Testis (tissue), 5 donors: ENCODE measurements at regions of chr4 and their contacts with region 1.

Region 1: DNA sequence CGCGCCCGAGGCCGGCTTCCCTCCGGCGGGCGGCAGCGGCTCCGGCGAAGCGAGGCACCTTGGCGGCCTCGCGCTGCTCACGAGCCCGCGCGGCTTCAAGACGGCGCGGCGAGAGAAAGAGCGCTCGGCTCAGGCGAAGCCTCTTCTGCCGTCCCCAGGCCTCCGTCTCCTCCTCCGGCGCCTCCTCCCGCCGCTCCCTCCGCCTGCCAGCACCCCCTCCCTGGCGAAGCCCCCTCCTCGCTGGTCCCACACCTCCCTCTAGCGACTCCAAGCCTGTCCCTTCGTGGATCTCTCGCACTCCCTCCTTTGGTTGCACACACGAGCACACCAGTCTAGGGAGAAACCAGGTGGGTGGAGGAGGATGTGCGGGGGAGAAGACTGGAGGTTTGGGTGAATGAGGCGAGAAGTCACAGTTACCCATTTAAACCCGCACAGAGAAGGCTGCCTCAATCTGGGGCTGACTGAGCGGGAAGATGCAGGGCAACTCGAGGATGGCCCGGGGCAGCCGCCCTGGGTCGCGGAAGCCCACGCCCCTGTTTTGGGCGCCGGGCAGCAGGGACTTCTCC is at the start of gene CAMK2D:
- DNase-seq: peak; percentile 94
- H3K4me3 ChIP-seq: peak within 1 kb of the TSS; percentile 86 to 93
- H3K27ac ChIP-seq: peak within 1 kb of the TSS; percentile 97 to 99
- H3K4me1 ChIP-seq: no peaks in the 10 kb centered on the region
- H3K27me3 ChIP-seq: no peaks in the 10 kb centered on the region
- CTCF ChIP-seq: peak; percentile 48 to 62 (median 59)
- POLR2A ChIP-seq: no peak
- total RNA-seq, gene CAMK2D: 72.4 to 88.1 TPM

Region 2: DNA sequence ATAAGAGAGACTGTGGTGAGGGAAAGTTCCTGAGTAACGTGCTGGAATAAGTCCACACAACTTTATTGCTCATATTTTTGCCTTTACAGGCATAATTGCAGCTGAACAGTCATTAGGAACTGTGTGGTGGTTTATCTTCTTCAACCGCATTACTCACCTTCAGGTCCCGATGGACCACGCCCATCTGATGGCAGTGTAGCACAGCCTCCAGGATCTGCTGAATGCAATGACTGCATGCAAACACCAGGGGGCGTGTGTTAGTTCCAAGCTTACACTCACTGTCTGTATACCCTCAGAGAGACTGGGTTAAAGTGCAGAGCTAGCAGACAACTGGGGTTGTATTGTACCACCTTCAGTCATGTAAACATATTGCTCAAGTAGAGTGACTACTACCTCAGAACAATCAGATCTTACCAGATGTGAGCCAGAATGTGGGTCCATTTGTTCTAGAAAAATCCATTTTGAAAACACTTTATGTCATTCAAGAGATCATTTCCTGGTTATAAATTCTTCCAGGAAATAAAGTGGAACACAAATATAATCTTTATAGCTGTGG is 214.1 kb before region 1 on chr4:
- intact Hi-C with region 1: loop called (anchors 5 kb)
- DNase-seq: peak; percentile 92
- H3K4me3 ChIP-seq: no peak overlapping the region
- H3K27ac ChIP-seq: peak overlapping the region in 1 of 2 donors; percentile 12
- H3K4me1 ChIP-seq: no peaks in the 10 kb centered on the region
- H3K27me3 ChIP-seq: no peaks in the 10 kb centered on the region
- CTCF ChIP-seq: peak; percentile 95 to 98 (median 97)
- POLR2A ChIP-seq: no peak

Region 3: GRCh38 chr4:113858924-113859323 is 97.2 kb after region 1 on chr4:
- intact Hi-C with region 1: no loop called
- DNase-seq: no peak
- H3K4me3 ChIP-seq: no peak overlapping the region
- H3K27ac ChIP-seq: no peak overlapping the region
- H3K4me1 ChIP-seq: no peaks in the 10 kb centered on the region
- H3K27me3 ChIP-seq: no peaks in the 10 kb centered on the region
- CTCF ChIP-seq: no peak
- POLR2A ChIP-seq: no peak